ENCODE measurements at regions of chr6 and their contacts with region 1.

Region 1: DNA sequence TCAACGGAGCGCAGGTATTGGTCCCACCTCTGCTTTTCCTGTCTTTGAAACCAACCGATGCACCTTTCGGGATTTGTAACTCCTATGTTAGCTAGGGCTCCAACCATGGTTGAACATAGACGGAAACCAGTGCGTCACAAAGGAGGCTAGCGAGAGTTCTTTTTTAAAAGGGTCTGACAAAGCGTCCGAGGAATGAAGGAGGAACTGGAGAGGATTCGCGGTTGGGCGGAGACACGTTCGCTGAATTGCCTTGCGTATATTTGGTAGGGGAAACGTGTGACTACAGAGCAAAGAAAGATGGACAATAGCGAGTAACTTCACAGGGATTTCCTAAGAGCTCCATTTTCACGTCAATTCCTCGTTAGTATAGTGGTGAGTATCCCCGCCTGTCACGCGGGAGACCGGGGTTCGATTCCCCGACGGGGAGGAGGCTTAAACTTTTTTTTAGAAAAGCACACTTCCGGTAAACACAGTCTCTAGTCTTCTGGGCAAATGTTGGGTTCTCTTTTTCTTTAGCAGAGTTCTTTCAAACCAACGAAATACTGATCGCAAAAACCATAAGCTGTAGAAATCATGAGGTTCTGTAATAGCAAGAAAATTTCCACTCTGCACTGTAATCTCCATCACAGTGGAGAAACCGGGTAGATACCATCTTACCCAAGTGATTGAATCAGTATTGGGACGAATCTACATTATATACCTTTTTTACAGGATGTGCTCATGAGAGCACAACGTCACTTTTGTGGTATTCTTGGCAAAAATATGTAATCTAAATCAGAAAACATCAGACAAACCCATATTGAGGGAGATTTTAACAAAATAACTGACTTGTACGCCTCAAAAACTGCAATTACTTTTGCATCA is 6.6 kb upstream of the ZNF184 start:
- DNase-seq: peak; percentile 85
- ATAC-seq: peak; percentile 82
- H3K4me3 ChIP-seq: peak overlapping the region; percentile 80 to 87 (median 81)
- H3K27ac ChIP-seq: peak overlapping the region; percentile 74
- H3K4me1 ChIP-seq: peaks cover 26% of the 10 kb centered on the region
- H3K27me3 ChIP-seq: no peaks in the 10 kb centered on the region; a peak in 1 of 5 replicates
- CTCF ChIP-seq: no peak
- EP300 ChIP-seq: peak in 1 of 2 experiments; percentile 32; a peak in 1 of 4 replicates
- POLR2A ChIP-seq: no peak; a peak in 2 of 4 replicates
- RAD21 ChIP-seq: peak; percentile 16; the same call in 1 of the 2 replicates

Region 2: GRCh38 chr6:27312146-27312949 is 167.2 kb before region 1 on chr6 and contains the start of gene POM121L2:
- CTCF ChIA-PET with region 1: no interaction called
- POLR2A ChIA-PET with region 1: no interaction called
- in situ Hi-C with region 1: no loop called
- intact Hi-C with region 1: loop called (anchors 2 kb)
- DNase-seq: peak; percentile 71
- ATAC-seq: peak; percentile 87
- H3K4me3 ChIP-seq: peak within 1 kb of the TSS; percentile 34 to 70 (median 60); a peak in 5 of 6 replicates
- H3K27ac ChIP-seq: no peak within 1 kb of the TSS
- H3K4me1 ChIP-seq: peaks cover 12% of the 10 kb centered on the region
- H3K27me3 ChIP-seq: peaks cover 2 to 22% of the 10 kb centered on the region in 2 experiments; a peak in 2 of 5 replicates
- CTCF ChIP-seq: peak; percentile 97
- EP300 ChIP-seq: no peak
- POLR2A ChIP-seq: no peak
- RAD21 ChIP-seq: peak; percentile 89
- total RNA-seq, gene POM121L2: not detected in 2 replicates

Region 3: GRCh38 chr6:27388293-27389197 is 91.0 kb before region 1 on chr6 and contains the start of gene ZNF391:
- CTCF ChIA-PET with region 1: no interaction called
- POLR2A ChIA-PET with region 1: no interaction called
- in situ Hi-C with region 1: no loop called
- intact Hi-C with region 1: loop called (anchors 1 kb)
- DNase-seq: peak; percentile 81
- ATAC-seq: peak; percentile 99
- H3K4me3 ChIP-seq: peak within 1 kb of the TSS; percentile 68 to 87 (median 81)
- H3K27ac ChIP-seq: peak within 1 kb of the TSS; percentile 54
- H3K4me1 ChIP-seq: no peaks in the 10 kb centered on the region
- H3K27me3 ChIP-seq: no peaks in the 10 kb centered on the region; a peak in 1 of 5 replicates
- CTCF ChIP-seq: no peak
- EP300 ChIP-seq: no peak; a peak in 1 of 4 replicates
- POLR2A ChIP-seq: peak; percentile 60 to 78
- RAD21 ChIP-seq: peak; percentile 47; the same call in 1 of the 2 replicates
- total RNA-seq, gene ZNF391: 1.7 and 2.7 TPM in 2 replicates

Measured in HepG2 (cell line).